ENCODE measurements at regions of chr5 and their contacts with region 1.

Region 1: DNA sequence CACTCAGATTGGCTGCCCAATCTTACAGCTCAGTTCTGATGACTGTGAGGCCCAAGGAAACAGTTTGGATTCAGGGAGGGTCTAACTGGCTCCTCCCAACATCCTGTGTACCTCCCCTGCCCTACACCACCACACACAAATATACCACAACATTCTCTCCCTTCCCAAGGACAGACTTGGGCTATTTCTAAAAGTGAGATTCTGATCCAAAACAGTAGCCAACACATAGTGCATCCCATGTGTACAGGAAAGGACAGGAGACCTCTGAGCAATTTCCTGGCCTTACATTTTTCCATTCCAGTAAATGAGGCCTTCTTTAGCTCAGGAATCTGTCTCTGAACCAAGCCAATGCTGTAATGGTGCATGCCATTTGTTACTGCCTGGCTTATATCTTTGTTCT is 20.8 kb downstream of the ZNF366 start:
- DNase-seq: no peak
- CTCF ChIP-seq: no peak

Region 2: GRCh38 chr5:72503888-72504491 is 17.6 kb after region 1 on chr5:
- CTCF ChIA-PET with region 1: interaction called, 11 read pairs
- POLR2A ChIA-PET with region 1: no interaction called
- DNase-seq: no peak
- CTCF ChIP-seq: no peak